GM18951 (cell line): ENCODE measurements at regions of chr9 and their contacts with region 1.

Region 1: GRCh38 chr9:20622330-20623020 is at the start of gene MLLT3:
- POLR2A ChIP-seq: peak; percentile 81

Region 2: DNA sequence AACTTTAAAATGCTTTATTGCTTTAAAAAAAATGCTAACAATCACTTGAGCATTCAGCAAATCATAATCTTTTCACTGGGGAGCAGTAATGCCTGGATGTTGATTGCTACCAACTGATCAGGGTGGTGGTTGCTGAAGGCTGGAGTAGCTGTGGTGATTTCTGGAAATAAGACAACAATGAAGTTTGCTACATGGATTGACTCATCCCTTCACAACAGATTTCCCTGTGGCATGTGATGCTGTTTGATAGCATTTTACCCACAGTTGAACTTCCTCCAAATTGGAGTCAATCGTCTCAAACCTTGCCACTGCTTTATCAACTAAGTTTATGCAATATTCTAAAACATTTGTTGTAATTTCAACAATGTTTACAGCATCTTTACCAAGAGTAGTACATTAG is 83.5 kb before region 1 on chr9:
- in situ Hi-C with region 1: no loop called
- POLR2A ChIP-seq: no peak

Region 3: GRCh38 chr9:20701060-20701459 is 78.6 kb after region 1 on chr9:
- in situ Hi-C with region 1: no loop called
- POLR2A ChIP-seq: no peak

Region 4: GRCh38 chr9:20941174-20941690 is 318.8 kb after region 1 on chr9:
- in situ Hi-C with region 1: loop called (anchors 10 kb)
- POLR2A ChIP-seq: no peak

Region 5: DNA sequence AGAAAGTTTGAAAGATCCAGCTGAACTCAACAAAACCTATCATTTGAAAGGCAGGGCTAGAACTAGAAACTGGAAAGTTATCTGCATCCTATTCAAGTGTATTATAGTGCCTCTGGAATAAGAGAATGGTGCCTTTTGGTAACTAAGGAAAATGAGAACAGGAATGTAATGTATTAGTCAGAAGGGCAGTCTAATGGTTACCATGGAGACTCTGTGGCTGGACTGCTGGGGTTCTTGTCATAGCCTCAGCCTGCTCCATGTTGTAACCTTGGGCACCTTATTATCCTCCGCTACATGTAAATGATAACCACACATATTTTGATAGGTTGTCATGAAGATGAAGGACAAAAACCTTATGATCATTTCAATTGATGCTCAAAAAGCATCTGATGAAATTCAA is 479.8 kb after region 1 on chr9:
- in situ Hi-C with region 1: loop called (anchors 10 kb)
- POLR2A ChIP-seq: no peak